HCT116 (cell line): ENCODE measurements at regions of chr1 and their contacts with region 1.

Region 1: DNA sequence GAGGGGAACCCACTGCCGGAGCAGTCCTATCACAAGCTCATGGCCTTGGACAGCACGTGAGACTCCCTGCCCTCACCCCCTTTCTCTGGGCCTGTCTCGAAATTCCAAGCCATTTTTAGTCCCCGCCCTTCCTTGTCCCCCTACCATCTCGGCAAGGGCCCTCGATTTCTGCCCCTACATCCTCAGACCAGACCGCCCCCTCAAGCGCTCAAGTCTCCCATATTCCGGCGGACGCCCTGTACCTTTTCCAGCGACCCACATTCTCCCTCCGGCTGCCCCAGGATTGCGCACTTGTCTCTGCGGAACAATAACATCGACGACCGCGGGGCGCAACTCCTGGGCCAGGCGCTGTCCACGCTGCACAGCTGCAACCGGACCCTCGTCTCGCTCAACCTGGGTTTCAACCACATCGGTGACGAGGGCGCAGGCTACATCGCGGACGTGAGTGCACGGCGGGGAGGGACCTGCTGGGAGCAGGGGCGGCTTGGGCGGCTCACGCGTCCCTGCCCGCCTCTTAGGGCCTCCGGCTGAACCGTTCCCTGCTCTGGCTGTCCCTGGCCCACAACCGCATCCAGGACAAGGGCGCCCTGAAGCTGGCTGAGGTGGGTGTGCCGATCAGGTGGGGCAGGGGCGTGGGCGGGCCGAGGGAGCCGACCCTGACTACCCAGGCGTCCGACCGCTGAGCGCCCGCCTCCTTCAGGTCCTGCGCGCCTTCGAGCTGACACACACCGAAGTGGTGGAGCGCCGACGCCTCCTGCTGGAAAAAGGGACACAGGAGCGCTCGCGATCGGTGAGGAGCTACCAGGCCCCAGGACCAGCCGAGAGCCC is 7.0 kb downstream of the LRRC71 start:
- DNase-seq: peak; percentile 66
- ATAC-seq: peak; percentile 89
- H3K4me3 ChIP-seq: peak overlapping the region; percentile 38 to 59
- H3K27ac ChIP-seq: peak overlapping the region; percentile 12; the same call in 1 of the 2 replicates
- H3K4me1 ChIP-seq: peaks cover 20 to 31% of the 10 kb centered on the region in 2 experiments
- H3K27me3 ChIP-seq: peaks cover 6% of the 10 kb centered on the region; the same call in 1 of the 2 replicates
- CTCF ChIP-seq: peak; percentile 81 to 93 (median 81)
- POLR2A ChIP-seq: no peak
- RAD21 ChIP-seq: peak; percentile 97

Region 2: DNA sequence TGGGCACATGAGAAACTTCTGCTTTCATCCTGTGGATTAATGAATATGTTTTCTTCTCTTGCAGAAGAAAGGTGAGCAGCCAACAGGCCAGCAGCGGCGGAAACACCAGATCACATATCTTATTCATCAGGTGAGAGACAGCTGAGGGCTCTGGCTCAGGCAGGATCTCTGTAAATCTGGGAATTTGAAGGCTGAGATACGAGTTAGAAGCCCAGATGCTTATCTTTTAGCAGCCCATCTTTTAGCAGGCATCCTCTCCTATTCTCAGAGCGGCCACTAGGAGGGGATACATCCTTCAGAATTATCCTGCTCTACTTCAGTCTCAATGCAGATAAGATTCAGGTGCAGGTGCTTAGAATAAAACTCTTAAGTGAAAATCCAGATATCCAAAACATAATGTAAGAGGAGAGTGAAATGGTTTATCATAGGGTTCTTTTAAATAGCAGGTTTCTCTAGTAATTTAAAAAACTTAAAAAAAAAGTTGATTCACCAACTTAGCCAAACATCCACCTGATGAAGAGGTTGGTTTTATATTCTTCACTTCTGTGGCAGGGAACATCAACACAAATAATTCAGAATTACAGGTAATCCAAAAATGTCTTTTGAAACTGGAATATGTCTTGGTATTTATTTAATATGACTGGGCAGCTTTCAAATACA is 130.1 kb before region 1 on chr1:
- CTCF ChIA-PET with region 1: interaction called, 3 read pairs
- POLR2A ChIA-PET with region 1: no interaction called
- RAD21 ChIA-PET with region 1: interaction called in 1 of 2 experiments, 4 read pairs
- intact Hi-C with region 1: loop called (anchors 5 kb)
- DNase-seq: peak; percentile 33
- ATAC-seq: peak; percentile 84
- H3K4me3 ChIP-seq: no peak overlapping the region
- H3K27ac ChIP-seq: no peak overlapping the region
- H3K4me1 ChIP-seq: peaks cover 2 to 8% of the 10 kb centered on the region in 2 experiments; a peak in 2 of 4 replicates
- H3K27me3 ChIP-seq: no peaks in the 10 kb centered on the region
- CTCF ChIP-seq: peak; percentile 65 to 91 (median 82); a peak in 5 of 6 replicates
- POLR2A ChIP-seq: no peak
- RAD21 ChIP-seq: peak; percentile 74

Region 3: DNA sequence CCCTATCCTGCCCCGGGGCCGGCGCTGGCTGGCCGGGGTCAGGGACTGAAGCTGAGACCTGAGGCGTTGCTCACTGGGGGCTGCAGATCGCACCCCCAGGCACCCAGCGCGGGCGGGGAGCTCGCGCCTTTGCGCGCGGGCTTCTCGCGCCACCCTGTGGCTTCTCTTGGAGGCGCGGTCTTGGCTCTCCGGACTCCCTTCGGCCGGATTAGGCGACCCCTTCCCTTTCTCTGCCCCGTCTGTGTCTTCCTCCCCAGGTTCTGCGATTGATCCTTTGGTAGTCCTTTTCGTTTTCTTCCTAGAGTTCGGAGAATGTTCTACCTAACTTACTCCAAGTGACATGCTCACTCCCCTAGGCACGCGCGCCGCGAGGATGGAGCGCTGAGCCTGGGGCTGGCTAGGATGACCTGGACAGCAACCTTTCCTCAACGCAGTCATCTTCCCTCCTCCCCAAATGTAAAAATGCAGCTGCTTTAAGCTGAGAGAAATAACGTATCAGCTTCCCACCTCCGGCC is 67.3 kb before region 1 on chr1:
- CTCF ChIA-PET with region 1: interaction called, 32 read pairs
- POLR2A ChIA-PET with region 1: no interaction called
- RAD21 ChIA-PET with region 1: no interaction called
- intact Hi-C with region 1: no loop called
- DNase-seq: peak; percentile 28
- ATAC-seq: peak; percentile 89
- H3K4me3 ChIP-seq: peak overlapping the region; percentile 30 to 55
- H3K27ac ChIP-seq: no peak overlapping the region
- H3K4me1 ChIP-seq: peaks cover 4 to 17% of the 10 kb centered on the region in 2 experiments; a peak in 3 of 4 replicates
- H3K27me3 ChIP-seq: peaks cover 3% of the 10 kb centered on the region; the same call in 1 of the 2 replicates
- CTCF ChIP-seq: peak; percentile 82 to 94 (median 83)
- POLR2A ChIP-seq: no peak
- RAD21 ChIP-seq: peak; percentile 96

Region 4: GRCh38 chr1:156892190-156893047 is 35.0 kb before region 1 on chr1:
- CTCF ChIA-PET with region 1: interaction called, 62 read pairs
- POLR2A ChIA-PET with region 1: interaction called, 7 read pairs
- RAD21 ChIA-PET with region 1: interaction called, 3 to 5 read pairs
- intact Hi-C with region 1: loop called (anchors 1 kb)
- DNase-seq: peak; percentile 75
- ATAC-seq: peak; percentile 77
- H3K4me3 ChIP-seq: peak overlapping the region in 1 of 2 experiments; percentile 18; a peak in 1 of 4 replicates
- H3K27ac ChIP-seq: no peak overlapping the region
- H3K4me1 ChIP-seq: peaks cover 24 to 60% of the 10 kb centered on the region in 2 experiments
- H3K27me3 ChIP-seq: no peaks in the 10 kb centered on the region
- CTCF ChIP-seq: peak in 2 of 3 experiments; percentile 86 to 89; a peak in 4 of 6 replicates
- POLR2A ChIP-seq: no peak
- RAD21 ChIP-seq: no peak

Region 5: GRCh38 chr1:156942576-156942975 is 15.1 kb after region 1 on chr1:
- CTCF ChIA-PET with region 1: no interaction called
- POLR2A ChIA-PET with region 1: no interaction called
- RAD21 ChIA-PET with region 1: no interaction called
- intact Hi-C with region 1: no loop called
- DNase-seq: no peak
- ATAC-seq: no peak
- H3K4me3 ChIP-seq: no peak overlapping the region
- H3K27ac ChIP-seq: no peak overlapping the region
- H3K4me1 ChIP-seq: peaks cover 0 to 7% of the 10 kb centered on the region in 2 experiments; a peak in 1 of 4 replicates
- H3K27me3 ChIP-seq: no peaks in the 10 kb centered on the region
- CTCF ChIP-seq: no peak
- POLR2A ChIP-seq: no peak
- RAD21 ChIP-seq: no peak

Region 6: GRCh38 chr1:157209514-157209913 is 282.1 kb after region 1 on chr1:
- CTCF ChIA-PET with region 1: no interaction called
- POLR2A ChIA-PET with region 1: no interaction called
- RAD21 ChIA-PET with region 1: no interaction called
- intact Hi-C with region 1: no loop called
- DNase-seq: no peak
- ATAC-seq: no peak
- H3K4me3 ChIP-seq: no peak overlapping the region
- H3K27ac ChIP-seq: no peak overlapping the region
- H3K4me1 ChIP-seq: no peaks in the 10 kb centered on the region
- H3K27me3 ChIP-seq: peaks cover 19% of the 10 kb centered on the region
- CTCF ChIP-seq: no peak
- POLR2A ChIP-seq: no peak
- RAD21 ChIP-seq: no peak